PC-3 (cell line): ENCODE measurements at regions of chr10 and their contacts with region 1.

Region 1: DNA sequence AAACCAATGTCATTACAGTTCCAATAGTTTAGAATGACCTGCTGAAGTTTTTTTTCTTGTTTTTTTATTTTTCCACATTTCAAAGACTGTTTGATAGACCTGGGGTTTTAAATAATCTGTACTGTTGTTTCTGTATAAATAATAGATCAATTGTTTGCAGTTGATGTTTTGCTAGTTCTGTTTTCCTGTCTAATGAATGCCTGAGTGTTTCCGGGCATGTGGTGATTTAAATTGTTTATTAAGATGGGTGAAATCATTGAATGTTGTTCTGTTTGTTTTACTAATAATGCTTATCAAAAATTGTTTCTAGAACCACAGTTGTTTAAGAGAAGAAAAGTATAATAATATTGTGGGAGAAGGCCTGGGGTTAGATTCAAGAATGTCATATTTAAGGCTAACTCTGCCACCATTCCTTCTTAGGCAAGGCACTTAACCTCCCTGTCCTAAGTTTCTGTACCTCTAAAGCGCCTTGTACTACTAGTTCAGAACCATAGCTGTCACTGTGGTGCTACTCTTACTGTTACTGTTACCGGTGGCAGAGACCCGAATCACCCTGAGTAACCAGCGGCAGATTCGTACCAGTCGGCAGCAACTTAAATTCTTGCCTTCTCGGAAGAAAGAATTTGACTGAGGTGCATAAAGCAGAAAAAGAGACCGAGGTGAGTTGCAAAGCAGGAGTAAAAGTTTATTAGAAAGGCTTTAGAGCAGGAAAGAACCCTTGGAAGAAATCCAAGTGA is 1014.1 kb downstream of the REEP3 start:
- DNase-seq: no peak
- ATAC-seq: no peak; the same call in 1 of the 2 replicates
- H3K4me3 ChIP-seq: no peak overlapping the region
- H3K27ac ChIP-seq: no peak overlapping the region
- H3K4me1 ChIP-seq: no peaks in the 10 kb centered on the region
- H3K27me3 ChIP-seq: no peaks in the 10 kb centered on the region
- CTCF ChIP-seq: no peak

Region 2: DNA sequence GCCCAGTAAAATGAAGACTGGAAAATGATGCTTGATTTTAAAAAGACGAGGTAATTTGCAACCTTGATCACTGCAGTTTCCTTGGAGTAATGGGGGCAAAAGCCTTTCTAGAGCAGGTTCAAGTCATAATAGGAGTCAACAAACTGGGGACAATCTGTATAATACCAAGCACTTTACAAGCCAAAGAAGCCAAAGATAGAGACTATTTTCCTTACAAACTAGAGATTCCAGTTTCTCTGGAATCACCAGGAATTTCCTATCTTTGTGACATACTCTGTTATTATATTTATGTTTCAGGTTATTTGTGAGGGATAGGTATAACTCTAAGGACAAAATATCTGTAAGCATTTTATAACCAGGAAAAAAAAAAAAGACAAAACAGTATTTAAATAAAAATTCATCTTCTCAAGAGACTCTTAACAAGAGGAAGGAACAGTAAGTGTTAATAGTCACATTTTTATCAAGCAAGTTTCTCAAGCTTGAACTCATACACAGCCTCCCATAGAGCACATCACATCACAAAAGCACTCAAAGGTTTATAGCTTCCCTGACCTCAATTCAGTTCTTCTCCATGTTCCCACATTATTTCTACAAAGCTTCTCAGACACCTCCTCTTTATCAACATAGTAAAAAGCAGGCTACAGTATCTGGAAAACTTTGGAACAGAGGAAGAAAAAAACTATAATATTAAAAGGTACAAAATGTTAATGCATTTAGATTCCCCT is 1088.4 kb before region 1 on chr10:
- CTCF ChIA-PET with region 1: no interaction called
- POLR2A ChIA-PET with region 1: no interaction called
- intact Hi-C with region 1: no loop called
- DNase-seq: no peak
- ATAC-seq: no peak
- H3K4me3 ChIP-seq: no peak overlapping the region
- H3K27ac ChIP-seq: no peak overlapping the region
- H3K4me1 ChIP-seq: peaks cover 4% of the 10 kb centered on the region
- H3K27me3 ChIP-seq: no peaks in the 10 kb centered on the region
- CTCF ChIP-seq: no peak

Region 3: GRCh38 chr10:64430690-64431323 is 104.5 kb before region 1 on chr10:
- CTCF ChIA-PET with region 1: no interaction called
- POLR2A ChIA-PET with region 1: no interaction called
- intact Hi-C with region 1: loop called (anchors 5 kb)
- DNase-seq: peak; percentile 81
- ATAC-seq: peak; percentile 99
- H3K4me3 ChIP-seq: no peak overlapping the region
- H3K27ac ChIP-seq: no peak overlapping the region
- H3K4me1 ChIP-seq: no peaks in the 10 kb centered on the region
- H3K27me3 ChIP-seq: no peaks in the 10 kb centered on the region
- CTCF ChIP-seq: peak; percentile 88

Region 4: DNA sequence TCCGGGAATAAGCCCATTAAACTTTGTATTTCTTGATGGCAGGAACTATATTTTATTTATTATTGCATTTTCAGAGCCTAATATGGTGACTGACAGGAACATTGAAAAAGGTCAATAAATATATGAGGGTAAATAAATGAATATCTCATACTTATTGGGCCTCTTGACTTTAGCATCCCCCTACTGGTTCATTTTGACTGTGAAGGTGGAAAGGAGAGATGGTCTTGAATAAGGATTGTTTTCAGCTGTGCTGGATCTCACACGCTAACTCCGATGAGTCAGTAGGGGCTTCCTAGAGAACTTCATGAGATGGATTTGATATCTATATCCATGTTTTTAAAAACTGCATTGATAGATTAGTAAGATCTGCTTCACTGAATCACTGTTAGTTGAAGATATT is 11.9 kb after region 1 on chr10:
- CTCF ChIA-PET with region 1: no interaction called
- POLR2A ChIA-PET with region 1: no interaction called
- intact Hi-C with region 1: no loop called
- DNase-seq: peak; percentile 19
- ATAC-seq: no peak; the same call in 1 of the 2 replicates
- H3K4me3 ChIP-seq: no peak overlapping the region
- H3K27ac ChIP-seq: no peak overlapping the region
- H3K4me1 ChIP-seq: no peaks in the 10 kb centered on the region
- H3K27me3 ChIP-seq: no peaks in the 10 kb centered on the region
- CTCF ChIP-seq: peak; percentile 41

Region 5: GRCh38 chr10:64576497-64576896 is 41.2 kb after region 1 on chr10:
- CTCF ChIA-PET with region 1: no interaction called
- POLR2A ChIA-PET with region 1: no interaction called
- intact Hi-C with region 1: no loop called
- DNase-seq: no peak
- ATAC-seq: no peak
- H3K4me3 ChIP-seq: no peak overlapping the region
- H3K27ac ChIP-seq: no peak overlapping the region
- H3K4me1 ChIP-seq: no peaks in the 10 kb centered on the region
- H3K27me3 ChIP-seq: no peaks in the 10 kb centered on the region
- CTCF ChIP-seq: no peak

Region 6: DNA sequence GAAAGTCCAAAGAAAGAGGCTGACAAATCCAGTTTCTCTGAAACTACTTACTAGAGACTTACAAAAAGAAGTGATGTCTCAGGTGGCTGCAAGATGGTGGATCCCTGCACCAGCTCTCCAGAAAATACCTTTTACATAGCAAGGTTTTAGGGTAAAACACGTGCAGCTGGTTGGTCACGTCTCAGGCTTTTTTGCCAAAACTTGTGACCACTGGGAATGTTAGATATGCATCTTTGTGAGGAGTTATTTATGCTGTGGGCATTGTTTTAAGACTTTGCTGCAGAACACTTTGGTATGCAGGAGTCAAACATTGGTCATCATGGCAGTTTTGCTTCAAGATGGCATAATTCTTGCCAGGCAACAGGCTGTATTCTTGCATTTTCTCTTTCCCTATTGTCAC is 338.7 kb after region 1 on chr10:
- CTCF ChIA-PET with region 1: no interaction called
- POLR2A ChIA-PET with region 1: no interaction called
- intact Hi-C with region 1: loop called (anchors 10 kb)
- DNase-seq: no peak
- ATAC-seq: peak; percentile 12; the same call in 1 of the 2 replicates
- H3K4me3 ChIP-seq: no peak overlapping the region
- H3K27ac ChIP-seq: peak overlapping the region; percentile 40
- H3K4me1 ChIP-seq: peaks cover 14% of the 10 kb centered on the region; the same call in 1 of the 2 replicates
- H3K27me3 ChIP-seq: no peaks in the 10 kb centered on the region
- CTCF ChIP-seq: no peak

Region 7: DNA sequence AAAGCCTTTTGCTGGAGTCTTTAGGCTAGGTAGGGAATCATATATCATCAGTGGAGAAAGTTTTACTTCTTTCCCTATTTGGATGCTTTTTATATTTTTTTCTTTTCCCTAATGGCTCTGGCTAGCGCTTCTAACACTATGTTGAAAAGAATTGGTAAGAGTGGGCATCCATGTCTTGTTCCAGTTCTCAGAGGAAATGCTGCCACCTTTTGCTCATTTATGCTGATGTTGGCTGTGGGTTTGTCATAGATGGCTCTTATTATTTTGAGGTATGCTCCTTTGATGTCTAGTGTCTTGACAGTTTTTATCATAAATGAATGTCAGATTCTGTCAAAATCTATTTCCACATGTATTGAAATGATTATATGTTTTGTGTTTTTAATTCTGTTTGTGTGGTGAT is 530.0 kb after region 1 on chr10:
- CTCF ChIA-PET with region 1: no interaction called
- POLR2A ChIA-PET with region 1: no interaction called
- intact Hi-C with region 1: loop called (anchors 10 kb)
- DNase-seq: no peak
- ATAC-seq: no peak
- H3K4me3 ChIP-seq: no peak overlapping the region
- H3K27ac ChIP-seq: no peak overlapping the region
- H3K4me1 ChIP-seq: no peaks in the 10 kb centered on the region
- H3K27me3 ChIP-seq: no peaks in the 10 kb centered on the region
- CTCF ChIP-seq: 0 out of 2 replicates have a peak, but pooled peaks have one; percentile 20

Region 8: DNA sequence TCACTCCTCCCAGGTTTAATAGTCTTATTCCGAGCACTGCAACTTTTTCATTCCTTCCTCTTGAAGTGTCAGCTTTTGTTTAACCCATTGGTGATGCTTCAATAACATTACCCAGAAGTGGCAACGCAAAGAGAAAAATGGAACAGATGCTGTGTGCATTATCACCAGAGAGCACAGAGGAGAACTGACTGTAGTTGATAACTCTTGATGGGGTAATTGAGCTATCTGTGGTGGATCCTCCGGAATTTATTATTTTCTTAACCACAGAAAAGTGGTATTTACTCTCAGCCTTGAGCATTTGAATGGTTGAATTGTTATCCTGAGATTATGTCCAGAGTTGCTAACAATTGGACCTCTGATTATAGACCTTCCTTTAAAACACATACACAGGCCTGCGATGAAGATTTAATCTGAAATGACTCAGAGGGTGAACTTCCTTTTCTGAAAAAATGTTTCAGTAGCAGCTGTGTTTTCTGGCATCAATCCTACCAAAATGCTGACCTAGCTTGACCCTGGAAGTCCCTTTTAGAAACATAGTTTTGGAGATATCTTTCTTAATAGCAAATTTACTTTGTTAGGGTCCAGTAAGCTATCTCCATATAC is 806.1 kb after region 1 on chr10:
- CTCF ChIA-PET with region 1: no interaction called
- POLR2A ChIA-PET with region 1: no interaction called
- intact Hi-C with region 1: loop called (anchors 10 kb)
- DNase-seq: peak; percentile 90
- ATAC-seq: peak; percentile 90
- H3K4me3 ChIP-seq: no peak overlapping the region
- H3K27ac ChIP-seq: peak overlapping the region; percentile 29
- H3K4me1 ChIP-seq: peaks cover 27% of the 10 kb centered on the region
- H3K27me3 ChIP-seq: no peaks in the 10 kb centered on the region
- CTCF ChIP-seq: no peak